PC-9 (cell line): ENCODE measurements at regions of chr2 and their contacts with region 1.

Region 1: GRCh38 chr2:120680136-120680761 is 55.4 kb upstream of the GLI2 start:
- DNase-seq: peak; percentile 70 to 78
- H3K4me3 ChIP-seq: no peak overlapping the region
- H3K27ac ChIP-seq: no peak overlapping the region
- H3K4me1 ChIP-seq: no peaks in the 10 kb centered on the region
- H3K27me3 ChIP-seq: 0 out of 2 replicates have a peak, but pooled peaks cover 6% of the 10 kb centered on the region
- CTCF ChIP-seq: peak; percentile 87

Region 2: DNA sequence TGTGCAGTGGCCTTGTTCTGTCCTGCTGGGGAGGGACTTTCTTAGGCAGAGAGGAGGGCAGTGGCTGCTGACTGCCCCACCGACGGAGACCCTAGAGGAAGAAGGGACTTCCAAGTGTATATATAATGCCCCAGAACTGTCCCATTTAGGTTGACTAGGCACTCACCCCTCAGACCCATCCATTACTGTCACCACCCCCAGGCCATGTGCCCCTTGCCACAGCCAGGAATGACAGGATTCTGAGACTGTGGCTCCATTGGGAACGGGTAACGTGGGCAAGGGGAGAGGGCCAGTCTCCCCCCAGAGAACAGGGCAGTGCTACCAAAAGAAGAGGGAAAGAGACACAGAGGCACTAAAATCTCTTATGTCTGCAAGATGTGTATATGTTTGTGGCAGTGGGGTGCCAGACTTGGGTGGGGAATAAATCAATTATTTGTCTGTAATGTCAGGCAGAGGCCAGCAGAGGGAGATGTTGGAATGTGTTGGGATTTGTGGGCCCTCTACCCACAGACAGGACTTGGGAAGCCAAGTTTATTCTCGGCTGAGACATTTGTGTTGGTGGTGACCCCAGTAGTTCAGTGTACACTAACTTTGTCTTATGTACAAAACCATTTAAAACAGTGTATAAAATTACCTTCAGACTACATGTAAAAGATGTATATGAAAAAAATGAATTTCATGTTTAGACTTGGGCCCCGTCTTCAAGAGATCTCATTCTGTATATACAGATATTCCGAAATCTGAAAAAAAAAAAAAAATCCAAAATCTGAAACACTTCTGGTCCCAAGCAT is 1272.6 kb before region 1 on chr2:
- CTCF ChIA-PET with region 1: no interaction called
- POLR2A ChIA-PET with region 1: no interaction called
- intact Hi-C with region 1: loop called (anchors 5 kb)
- DNase-seq: peak; percentile 44 to 57
- H3K4me3 ChIP-seq: no peak overlapping the region
- H3K27ac ChIP-seq: no peak overlapping the region
- H3K4me1 ChIP-seq: peaks cover 5% of the 10 kb centered on the region; the same call in 1 of the 2 replicates
- H3K27me3 ChIP-seq: no peaks in the 10 kb centered on the region
- CTCF ChIP-seq: peak; percentile 98

Region 3: DNA sequence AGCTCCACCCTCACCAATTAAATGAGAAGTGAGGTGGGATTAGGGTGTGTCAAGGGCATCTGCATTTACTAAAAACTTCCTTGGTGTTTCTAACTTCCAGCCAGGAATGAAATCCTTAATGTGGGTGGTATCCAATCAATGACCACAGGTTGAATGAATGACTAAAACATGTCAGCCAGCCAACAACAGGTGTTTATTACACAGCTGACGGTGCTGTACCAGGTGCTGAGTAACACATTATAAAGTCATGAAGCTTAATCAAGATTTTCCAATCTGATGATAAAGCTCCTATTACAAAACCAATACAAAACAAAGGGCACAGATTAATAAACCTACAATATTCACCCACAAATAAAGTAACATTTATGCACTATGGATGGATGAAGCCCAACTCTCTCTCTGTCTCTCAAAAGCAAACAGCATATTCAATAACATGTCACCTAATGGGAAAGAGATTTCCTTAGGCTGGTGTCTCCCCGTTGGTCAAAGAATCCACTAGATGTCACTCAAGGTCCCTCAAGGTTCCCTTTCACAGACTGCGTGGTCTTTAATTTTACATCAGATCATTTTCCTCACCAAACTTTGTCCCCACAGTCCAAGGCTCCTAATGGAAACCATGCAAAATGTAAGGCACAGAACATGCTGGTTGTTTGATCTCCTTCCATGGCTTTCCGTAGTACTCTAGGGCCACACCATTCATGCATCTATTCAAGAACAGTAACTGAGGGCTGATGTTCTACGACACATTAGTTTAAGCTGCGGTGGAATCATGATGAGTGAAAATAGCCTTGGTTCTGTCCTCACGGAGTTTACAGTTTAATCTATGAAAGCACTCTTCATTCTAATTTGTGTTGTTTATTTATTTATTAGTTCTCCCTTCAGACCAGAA is 927.0 kb before region 1 on chr2:
- CTCF ChIA-PET with region 1: no interaction called
- POLR2A ChIA-PET with region 1: no interaction called
- intact Hi-C with region 1: loop called (anchors 5 kb)
- DNase-seq: no peak
- H3K4me3 ChIP-seq: no peak overlapping the region
- H3K27ac ChIP-seq: no peak overlapping the region
- H3K4me1 ChIP-seq: peaks cover 16% of the 10 kb centered on the region
- H3K27me3 ChIP-seq: no peaks in the 10 kb centered on the region
- CTCF ChIP-seq: peak; percentile 73

Region 4: DNA sequence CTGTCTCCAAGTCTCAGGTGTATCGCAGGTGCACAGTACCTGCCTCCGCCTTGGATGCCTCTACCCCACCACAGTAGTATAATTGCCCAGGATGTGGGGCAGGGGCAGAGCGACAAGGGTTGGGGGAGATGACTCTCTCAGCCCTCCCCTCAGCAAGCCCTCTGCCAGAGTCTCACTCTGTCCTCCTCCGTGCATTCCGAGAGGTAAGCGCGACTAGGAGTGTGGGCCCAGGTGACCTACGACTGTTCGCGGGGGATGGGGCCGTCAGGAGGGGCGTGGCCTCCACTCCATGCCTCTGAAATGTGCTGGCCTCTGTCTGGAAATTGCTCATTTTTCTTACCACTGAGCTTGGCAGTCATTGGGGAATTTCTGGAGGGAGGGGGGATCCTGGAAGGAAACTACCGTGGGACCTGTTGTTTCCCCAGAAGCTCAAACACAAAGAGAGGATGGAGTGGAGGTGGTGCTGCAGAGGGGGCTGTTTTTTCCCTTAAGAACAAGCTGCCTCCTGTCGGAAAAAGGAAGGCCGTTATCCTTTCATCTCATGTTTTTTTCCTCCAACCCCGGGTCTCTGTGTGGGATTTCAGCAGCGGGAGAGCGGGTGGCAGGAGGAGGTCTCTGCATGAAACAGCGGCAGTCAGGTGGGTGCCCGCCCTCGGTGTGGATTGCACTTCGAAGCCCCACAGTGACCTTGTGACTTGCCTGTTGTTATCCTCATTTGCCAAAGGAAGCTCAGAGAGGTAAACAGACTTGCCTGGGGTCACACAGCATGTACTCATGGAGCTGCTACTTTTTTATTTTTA is 440.6 kb before region 1 on chr2:
- CTCF ChIA-PET with region 1: no interaction called
- POLR2A ChIA-PET with region 1: interaction called, 4 read pairs
- intact Hi-C with region 1: loop called (anchors 5 kb)
- DNase-seq: peak; percentile 90 to 92
- H3K4me3 ChIP-seq: peak overlapping the region; percentile 41; the same call in 1 of the 2 replicates
- H3K27ac ChIP-seq: peak overlapping the region; percentile 95
- H3K4me1 ChIP-seq: peaks cover 87% of the 10 kb centered on the region
- H3K27me3 ChIP-seq: no peaks in the 10 kb centered on the region
- CTCF ChIP-seq: no peak

Region 5: GRCh38 chr2:120436885-120437603 is 243.2 kb before region 1 on chr2:
- CTCF ChIA-PET with region 1: no interaction called
- POLR2A ChIA-PET with region 1: no interaction called
- intact Hi-C with region 1: loop called (anchors 5 kb)
- DNase-seq: peak; percentile 56 to 77
- H3K4me3 ChIP-seq: no peak overlapping the region
- H3K27ac ChIP-seq: no peak overlapping the region
- H3K4me1 ChIP-seq: peaks cover 22% of the 10 kb centered on the region
- H3K27me3 ChIP-seq: no peaks in the 10 kb centered on the region
- CTCF ChIP-seq: peak; percentile 84